ENCODE measurements at regions of chr14 and their contacts with region 1.

Region 1: GRCh38 chr14:75982266-75983018 is 647 bp upstream of the TGFB3 start:
- DNase-seq: peak; percentile 86
- ATAC-seq: peak; percentile 62
- H3K4me3 Mint-ChIP-seq: peak overlapping the region; percentile 67
- H3K27ac Mint-ChIP-seq: peak overlapping the region; percentile 78
- H3K4me1 Mint-ChIP-seq: peaks cover 42% of the 10 kb centered on the region
- H3K27me3 Mint-ChIP-seq: no peaks in the 10 kb centered on the region

Region 2: DNA sequence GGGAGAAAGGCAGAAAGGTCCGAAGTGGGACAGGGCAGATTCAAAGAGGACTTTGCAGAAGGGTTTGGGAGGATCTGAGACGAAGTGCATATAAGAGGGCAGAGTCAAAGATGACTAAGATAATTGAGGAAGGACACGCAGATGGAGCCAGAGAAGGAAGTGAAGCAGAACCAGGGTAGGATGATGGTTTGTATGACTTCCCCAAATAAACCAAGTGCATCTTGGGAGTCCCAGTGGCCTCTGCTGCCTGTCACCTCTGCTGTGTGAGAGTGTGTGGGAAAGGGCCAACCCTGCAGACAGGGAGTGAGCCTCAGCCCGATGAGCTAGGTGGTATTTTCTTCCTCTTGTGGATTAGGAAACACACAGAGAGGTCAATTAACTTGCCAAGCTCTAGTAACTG is 367.2 kb before region 1 on chr14:
- CTCF ChIA-PET with region 1: no interaction called
- POLR2A ChIA-PET with region 1: no interaction called
- intact Hi-C with region 1: no loop called
- DNase-seq: no peak
- ATAC-seq: no peak
- H3K4me3 Mint-ChIP-seq: no peak overlapping the region
- H3K27ac Mint-ChIP-seq: no peak overlapping the region
- H3K4me1 Mint-ChIP-seq: peaks cover 2% of the 10 kb centered on the region
- H3K27me3 Mint-ChIP-seq: no peaks in the 10 kb centered on the region

Region 3: GRCh38 chr14:76151398-76152339 is 169.2 kb after region 1 on chr14 and contains the start of gene GPATCH2L:
- CTCF ChIA-PET with region 1: interaction called, 3 read pairs
- POLR2A ChIA-PET with region 1: no interaction called
- intact Hi-C with region 1: loop called in 1 of 2 experiments (anchors 1 kb)
- DNase-seq: peak; percentile 98
- ATAC-seq: peak; percentile 92
- H3K4me3 Mint-ChIP-seq: peak within 1 kb of the TSS; percentile 92
- H3K27ac Mint-ChIP-seq: peak within 1 kb of the TSS; percentile 95
- H3K4me1 Mint-ChIP-seq: peaks cover 46% of the 10 kb centered on the region
- H3K27me3 Mint-ChIP-seq: no peaks in the 10 kb centered on the region
- total RNA-seq, gene GPATCH2L: 43.0 to 47.2 TPM

Region 4: GRCh38 chr14:76742966-76743365 is 760.5 kb after region 1 on chr14:
- CTCF ChIA-PET with region 1: no interaction called
- POLR2A ChIA-PET with region 1: no interaction called
- intact Hi-C with region 1: no loop called
- DNase-seq: no peak
- ATAC-seq: no peak
- H3K4me3 Mint-ChIP-seq: no peak overlapping the region
- H3K27ac Mint-ChIP-seq: no peak overlapping the region
- H3K4me1 Mint-ChIP-seq: no peaks in the 10 kb centered on the region
- H3K27me3 Mint-ChIP-seq: peaks cover 16% of the 10 kb centered on the region

Measured in activated CD4-positive, alpha-beta T cell treated with anti-CD3 and anti-CD28 coated beads for 36 hours (primary cell).